Common myeloid progenitor, CD34-positive (primary cell): ENCODE measurements at regions of chr13 and their contacts with region 1.

Region 1: DNA sequence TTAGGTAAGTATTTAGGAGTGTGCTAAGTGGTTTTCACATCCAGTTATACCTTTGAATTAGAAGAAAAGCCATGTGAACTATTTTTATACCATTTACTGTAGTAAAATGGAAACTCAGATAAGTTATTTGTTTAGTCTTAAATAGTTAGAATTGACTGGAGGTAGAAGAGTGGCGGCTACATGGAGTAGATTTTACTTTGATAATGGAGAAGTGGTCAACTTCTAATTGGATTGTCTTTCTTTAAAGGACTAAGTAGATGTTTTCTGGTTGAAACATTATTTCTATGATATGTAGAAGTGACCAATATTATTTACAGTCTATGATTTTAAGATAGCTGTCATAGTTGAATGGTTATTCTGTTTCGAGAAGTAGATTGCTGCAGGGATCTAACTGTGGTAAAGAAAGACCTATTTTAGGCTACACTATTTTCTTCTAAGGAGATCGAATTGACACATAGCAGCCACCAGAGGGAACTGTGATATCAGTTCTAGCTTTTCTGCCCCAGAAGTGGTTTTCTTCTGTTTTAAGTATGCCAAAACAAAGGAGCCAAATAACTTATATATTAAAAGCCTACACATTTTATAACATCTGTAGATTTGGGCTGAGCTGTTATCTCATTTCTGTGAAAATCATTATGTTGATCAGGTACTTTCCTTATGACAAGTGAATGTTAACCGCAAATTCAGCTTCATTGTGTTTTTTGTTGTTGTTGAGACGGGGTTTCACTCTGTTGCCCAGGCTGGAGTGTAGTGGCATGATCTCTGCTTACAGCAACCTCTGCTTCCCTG is 26.1 kb downstream of the ZMYM2 start:
- DNase-seq: peak; percentile 31 to 69 (median 69)
- H3K4me3 ChIP-seq: no peak overlapping the region
- H3K27ac ChIP-seq: no peak overlapping the region
- H3K4me1 ChIP-seq: peaks cover 0 to 14% (median 3%) of the 10 kb centered on the region in 4 experiments
- H3K27me3 ChIP-seq: no peaks in the 10 kb centered on the region

Region 2: GRCh38 chr13:19772306-19772705 is 212.3 kb before region 1 on chr13:
- CTCF ChIA-PET with region 1: no interaction called
- POLR2A ChIA-PET with region 1: no interaction called
- DNase-seq: no peak
- H3K4me3 ChIP-seq: no peak overlapping the region
- H3K27ac ChIP-seq: no peak overlapping the region
- H3K4me1 ChIP-seq: peaks cover 0 to 2% (median 0%) of the 10 kb centered on the region in 4 experiments
- H3K27me3 ChIP-seq: no peaks in the 10 kb centered on the region

Region 3: GRCh38 chr13:19967621-19968020 is 17.0 kb before region 1 on chr13:
- CTCF ChIA-PET with region 1: interaction called, 20 read pairs
- POLR2A ChIA-PET with region 1: no interaction called
- DNase-seq: peak in 2 of 3 donors; percentile 47 to 62
- H3K4me3 ChIP-seq: no peak overlapping the region
- H3K27ac ChIP-seq: no peak overlapping the region
- H3K4me1 ChIP-seq: peaks cover 0 to 5% (median 2%) of the 10 kb centered on the region in 4 experiments
- H3K27me3 ChIP-seq: no peaks in the 10 kb centered on the region

Region 4: DNA sequence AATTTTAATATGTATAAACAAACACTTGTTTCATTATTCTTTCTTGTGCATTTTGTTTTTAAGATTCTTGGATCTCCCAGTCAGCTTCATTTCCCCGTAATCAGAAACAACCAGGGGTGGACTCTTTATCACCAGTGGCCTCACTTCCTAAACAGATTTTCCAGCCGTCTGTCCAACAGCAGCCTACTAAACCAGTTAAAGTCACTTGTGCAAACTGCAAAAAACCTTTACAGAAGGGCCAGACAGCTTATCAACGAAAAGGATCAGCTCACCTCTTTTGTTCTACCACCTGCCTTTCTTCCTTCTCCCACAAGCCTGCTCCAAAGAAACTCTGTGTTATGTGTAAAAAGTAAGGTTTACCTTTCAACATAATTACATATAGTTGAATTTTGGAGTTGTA is 18.2 kb after region 1 on chr13:
- CTCF ChIA-PET with region 1: interaction called, 52 read pairs
- POLR2A ChIA-PET with region 1: interaction called, 5 read pairs
- DNase-seq: peak in 2 of 3 donors; percentile 48 to 66
- H3K4me3 ChIP-seq: no peak overlapping the region
- H3K27ac ChIP-seq: no peak overlapping the region
- H3K4me1 ChIP-seq: peaks cover 0 to 5% (median 2%) of the 10 kb centered on the region in 4 experiments
- H3K27me3 ChIP-seq: no peaks in the 10 kb centered on the region